ENCODE measurements at regions of chr16 and their contacts with region 1.

Region 1: GRCh38 chr16:969508-970378 is 1.0 kb downstream of the LMF1 start:
- DNase-seq: no peak
- H3K4me3 Mint-ChIP-seq: peak overlapping the region; percentile 75
- H3K27ac Mint-ChIP-seq: no peak overlapping the region
- H3K4me1 Mint-ChIP-seq: peaks cover 10% of the 10 kb centered on the region
- H3K27me3 Mint-ChIP-seq: peaks cover 7% of the 10 kb centered on the region

Region 2: GRCh38 chr16:807347-808084 is 162.2 kb before region 1 on chr16:
- intact Hi-C with region 1: loop called (anchors 10 kb)
- DNase-seq: peak; percentile 85
- H3K4me3 Mint-ChIP-seq: peak overlapping the region; percentile 99
- H3K27ac Mint-ChIP-seq: peak overlapping the region; percentile 96
- H3K4me1 Mint-ChIP-seq: peaks cover 10% of the 10 kb centered on the region
- H3K27me3 Mint-ChIP-seq: peaks cover 4% of the 10 kb centered on the region

Region 3: DNA sequence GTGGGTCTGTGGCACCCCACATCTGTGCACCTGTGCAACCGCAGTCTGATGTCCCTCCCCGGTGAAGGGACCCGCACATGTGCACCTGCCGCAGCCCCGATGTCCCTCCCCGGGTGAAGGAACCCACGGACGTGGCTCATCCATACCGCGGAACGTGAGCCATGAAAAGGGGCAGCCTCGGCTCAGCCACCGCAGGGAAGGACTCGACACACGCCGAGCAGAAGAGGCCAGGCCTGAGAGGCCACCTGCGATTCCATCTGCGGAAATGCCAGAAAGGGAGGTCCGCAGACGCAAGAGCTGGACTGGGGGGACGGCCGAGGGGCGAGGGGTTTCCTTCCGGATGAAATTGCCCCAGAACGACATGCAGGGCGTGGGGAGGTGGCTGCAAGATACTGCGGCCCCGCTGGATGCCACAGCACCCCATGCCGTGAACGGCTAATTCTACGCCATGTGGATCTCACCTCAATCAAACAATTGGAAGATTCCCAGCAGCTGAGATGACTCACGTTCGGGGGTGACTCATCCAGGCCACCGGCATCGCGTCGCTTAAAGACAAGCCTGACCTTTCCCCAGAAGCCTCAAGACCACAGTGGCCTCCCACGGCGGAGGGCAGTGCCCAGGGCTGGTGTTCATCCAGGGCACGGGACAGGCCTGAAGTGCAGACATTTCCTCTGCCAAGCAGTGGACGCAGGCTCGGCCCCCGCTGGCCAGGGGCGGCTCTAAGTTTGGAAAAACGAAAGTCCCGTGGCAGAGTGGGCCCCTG is 32.8 kb after region 1 on chr16:
- intact Hi-C with region 1: loop called (anchors 5 kb)
- DNase-seq: no peak
- H3K4me3 Mint-ChIP-seq: peak overlapping the region; percentile 30
- H3K27ac Mint-ChIP-seq: peak overlapping the region; percentile 66
- H3K4me1 Mint-ChIP-seq: peaks cover 24% of the 10 kb centered on the region
- H3K27me3 Mint-ChIP-seq: peaks cover 16% of the 10 kb centered on the region

Measured in activated T-helper 2 cell treated with anti-CD3 and anti-CD28 coated beads, Interferon-gamma antibody, Interleukin-2, Interleukin-4, amounts not matched to agents 10 μg/mL and 5 μg/mL and 100 μg/mL, durations not matched to agents 14 hours and 24 hours and 36 hours (primary cell).